ENCODE measurements at regions of chr10 and their contacts with region 1.

Region 1: DNA sequence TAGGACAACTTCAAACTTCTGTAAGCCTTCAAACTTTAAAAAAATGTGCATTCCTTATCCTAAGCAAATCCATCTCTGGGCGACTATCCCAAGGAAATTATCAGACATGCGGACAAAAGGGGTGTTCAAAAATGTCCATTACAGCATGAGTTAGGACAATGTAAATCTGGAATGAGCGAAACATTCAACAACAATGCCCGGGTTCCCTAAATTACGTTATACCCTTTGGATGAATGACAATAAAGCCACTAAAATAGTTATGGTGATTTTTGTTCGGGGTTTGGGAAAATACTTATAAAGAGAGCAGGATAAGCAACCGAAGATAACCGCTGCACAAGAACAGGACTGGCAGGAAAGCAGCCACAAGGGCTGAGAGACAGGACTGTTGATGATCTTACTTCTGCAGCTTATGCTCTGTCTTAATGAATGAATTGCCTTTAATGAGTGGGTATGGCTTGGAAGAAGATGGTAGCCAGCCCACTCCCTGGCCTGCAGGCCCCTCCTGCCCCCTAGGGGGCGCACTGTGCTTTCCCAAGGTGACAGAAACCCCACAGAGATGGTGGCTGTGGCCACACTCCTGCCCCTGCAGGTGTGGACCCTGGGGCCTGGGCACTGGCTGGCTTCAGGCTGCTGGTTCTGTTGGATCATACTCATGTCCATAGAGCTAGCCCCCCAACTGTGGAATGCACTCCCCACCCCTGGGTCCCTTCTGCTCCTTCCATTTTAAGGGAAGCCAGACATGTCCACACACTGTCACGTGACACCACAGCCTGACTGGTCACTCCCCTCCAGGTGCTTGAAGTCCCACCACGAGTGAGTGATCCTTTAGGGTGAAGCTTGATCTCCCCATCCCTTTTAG is 45.0 kb downstream of the ZCCHC24 start:
- DNase-seq: peak in 1 of 2 experiments; percentile 57
- H3K4me3 ChIP-seq: no peak overlapping the region
- H3K27ac ChIP-seq: no peak overlapping the region
- H3K4me1 ChIP-seq: peaks cover 22% of the 10 kb centered on the region
- H3K27me3 ChIP-seq: no peaks in the 10 kb centered on the region
- CTCF ChIP-seq: peak; percentile 91

Region 2: DNA sequence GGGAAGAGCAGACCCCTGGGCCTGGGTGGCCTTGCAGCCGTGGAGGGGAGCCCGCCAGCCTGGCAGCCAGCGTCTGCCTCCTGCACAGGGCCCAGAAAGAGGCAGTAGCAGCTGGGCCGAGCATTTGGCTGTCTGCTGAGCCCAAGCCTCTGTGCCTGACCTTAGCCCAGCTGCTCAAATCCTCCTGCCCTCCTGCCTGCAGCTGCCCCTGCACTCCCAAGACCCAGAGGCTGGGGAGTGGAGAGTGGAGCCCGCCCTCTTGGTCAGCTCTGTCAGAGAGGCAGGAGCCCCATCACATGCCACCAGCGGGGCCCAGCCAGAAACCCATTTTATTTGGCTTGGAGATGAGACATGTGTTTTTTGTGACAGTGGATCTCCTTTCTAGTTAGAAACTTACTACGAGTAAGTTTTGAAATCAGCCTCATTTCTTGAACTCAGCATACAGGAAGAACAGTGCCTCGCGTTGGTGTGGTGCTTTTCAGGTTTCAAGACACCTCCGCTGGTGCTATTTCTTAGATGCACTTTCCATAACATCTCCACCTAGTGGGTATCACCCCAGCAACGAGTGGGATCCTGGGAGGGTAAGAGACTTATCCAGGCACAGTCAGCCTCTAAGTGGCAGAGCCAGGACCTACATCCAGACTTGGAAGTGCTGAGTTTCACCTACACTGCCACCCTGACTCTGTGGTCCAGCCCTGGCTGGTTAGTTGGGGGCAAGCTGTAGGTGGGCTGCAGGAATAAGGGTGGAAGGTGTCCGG is 889.6 kb before region 1 on chr10:
- CTCF ChIA-PET with region 1: interaction called, 10 read pairs
- POLR2A ChIA-PET with region 1: no interaction called
- intact Hi-C with region 1: no loop called
- DNase-seq: peak in 1 of 2 experiments; percentile 26
- H3K4me3 ChIP-seq: no peak overlapping the region
- H3K27ac ChIP-seq: no peak overlapping the region
- H3K4me1 ChIP-seq: no peaks in the 10 kb centered on the region
- H3K27me3 ChIP-seq: 0 out of 2 replicates have a peak, but pooled peaks cover 5% of the 10 kb centered on the region
- CTCF ChIP-seq: no peak

Region 3: GRCh38 chr10:79463578-79464496 is 63.5 kb after region 1 on chr10:
- CTCF ChIA-PET with region 1: no interaction called
- POLR2A ChIA-PET with region 1: interaction called, 5 read pairs
- intact Hi-C with region 1: loop called (anchors 1 kb)
- DNase-seq: no peak
- H3K4me3 ChIP-seq: no peak overlapping the region
- H3K27ac ChIP-seq: no peak overlapping the region
- H3K4me1 ChIP-seq: no peaks in the 10 kb centered on the region
- H3K27me3 ChIP-seq: 0 out of 2 replicates have a peak, but pooled peaks cover 9% of the 10 kb centered on the region
- CTCF ChIP-seq: no peak

Region 4: DNA sequence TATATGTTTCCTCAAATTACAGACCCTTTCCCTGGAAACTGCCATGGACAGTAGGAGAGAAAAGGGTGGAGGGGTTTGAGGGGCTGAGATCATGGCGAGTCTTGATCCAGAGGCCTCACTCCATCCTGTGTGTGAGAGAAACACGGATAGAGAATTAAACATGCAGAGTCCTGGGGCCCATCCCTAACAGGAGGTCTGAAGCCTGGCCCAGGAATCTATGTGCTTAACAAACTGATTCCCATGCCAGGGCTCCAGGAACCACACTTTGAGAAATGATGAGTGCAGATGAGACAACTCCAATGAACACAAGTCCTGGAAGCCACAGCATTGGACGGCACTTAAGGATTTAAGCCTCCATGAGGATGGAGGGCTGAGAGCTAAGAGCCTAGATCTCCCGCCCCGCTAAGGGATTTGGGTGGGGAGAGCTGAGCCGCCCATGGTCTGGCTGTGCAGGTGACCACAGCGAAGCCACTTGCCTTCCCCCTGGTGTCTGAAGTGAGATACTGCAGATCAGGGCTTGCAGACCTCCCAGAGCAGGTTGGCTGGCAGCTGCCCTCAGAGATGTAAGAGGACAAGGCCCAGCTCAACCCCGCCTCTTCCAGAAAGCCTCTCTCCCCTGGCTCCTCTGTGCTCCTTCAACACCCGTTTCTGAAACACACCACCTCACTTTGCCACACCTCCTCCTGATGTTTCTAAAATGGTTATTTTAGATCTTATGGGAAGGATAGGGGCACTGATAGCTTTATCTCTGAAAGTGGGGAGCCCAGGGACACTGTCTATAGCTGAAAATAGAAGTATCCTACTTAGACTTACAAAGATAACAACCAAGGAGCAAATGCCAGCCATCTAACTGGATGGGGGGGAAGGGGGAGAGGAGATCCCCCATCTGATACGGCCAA is 87.2 kb after region 1 on chr10:
- CTCF ChIA-PET with region 1: interaction called, 4 read pairs
- POLR2A ChIA-PET with region 1: no interaction called
- intact Hi-C with region 1: loop called (anchors 1 kb)
- DNase-seq: peak in 1 of 2 experiments; percentile 57
- H3K4me3 ChIP-seq: no peak overlapping the region
- H3K27ac ChIP-seq: peak overlapping the region; percentile 11; the same call in 1 of the 2 replicates
- H3K4me1 ChIP-seq: peaks cover 15% of the 10 kb centered on the region
- H3K27me3 ChIP-seq: no peaks in the 10 kb centered on the region
- CTCF ChIP-seq: peak; percentile 70